Right ventricle myocardium superior (tissue), 1 donor: ENCODE measurements at regions of chr5 and their contacts with region 1.

Region 1: GRCh38 chr5:53170748-53171349 is 61.3 kb upstream of the MOCS2 start:
- DNase-seq: no peak
- ATAC-seq: peak; percentile 48

Region 2: GRCh38 chr5:53069626-53070025 is 101.2 kb before region 1 on chr5:
- intact Hi-C with region 1: no loop called
- DNase-seq: no peak
- ATAC-seq: no peak

Region 3: GRCh38 chr5:53291047-53291927 is 120.4 kb after region 1 on chr5:
- intact Hi-C with region 1: no loop called
- DNase-seq: no peak
- ATAC-seq: peak; percentile 93

Region 4: GRCh38 chr5:53607886-53608285 is 437.0 kb after region 1 on chr5:
- intact Hi-C with region 1: no loop called
- DNase-seq: no peak
- ATAC-seq: no peak

Region 5: GRCh38 chr5:54217826-54218503 is 1047.1 kb after region 1 on chr5:
- intact Hi-C with region 1: loop called (anchors 5 kb)
- DNase-seq: no peak
- ATAC-seq: peak; percentile 92